Activated naive CD4-positive, alpha-beta T cell treated with anti-CD3 and anti-CD28 coated beads for 36 hours (primary cell): ENCODE measurements at regions of chr2 and their contacts with region 1.

Region 1: DNA sequence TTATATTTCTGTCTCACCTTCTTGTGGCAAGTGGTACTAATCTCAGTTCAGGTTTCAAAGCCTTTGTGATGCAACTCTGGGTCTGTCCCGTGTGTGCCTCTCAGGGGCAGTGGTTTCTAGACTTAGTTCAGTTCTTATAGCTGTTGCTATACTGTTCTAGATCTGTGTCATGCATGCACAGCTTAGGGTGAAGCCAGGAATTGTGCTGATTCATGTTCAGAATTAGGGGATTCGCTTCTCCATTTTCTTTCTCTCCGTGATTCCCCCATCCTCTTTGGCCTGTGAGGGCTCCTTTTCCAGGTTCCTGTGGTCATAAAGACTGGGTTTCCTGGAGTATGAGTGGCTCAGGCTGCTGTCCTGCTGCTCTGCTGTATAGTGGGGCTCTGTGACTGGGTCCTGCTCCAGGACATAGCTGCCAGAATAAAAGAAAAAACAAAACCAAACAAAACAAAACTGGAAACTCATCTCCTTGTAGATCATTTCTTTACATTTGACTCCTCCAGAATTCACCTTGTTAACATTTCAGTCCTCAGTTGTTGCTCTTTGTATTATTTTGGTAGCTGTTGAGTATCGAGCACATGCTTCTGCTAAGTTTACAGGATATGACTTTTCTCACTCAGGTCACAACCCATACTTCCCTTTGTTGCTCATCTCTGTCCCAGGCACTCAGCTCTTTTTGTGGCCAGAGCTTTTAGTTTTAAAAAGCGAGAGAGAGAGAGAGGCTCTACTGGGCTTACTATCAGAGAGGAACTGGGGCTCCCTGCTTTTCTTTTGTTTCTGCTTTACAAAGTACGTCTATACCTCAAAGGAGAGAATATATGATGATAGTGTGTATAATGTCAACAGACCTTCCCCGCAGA is 34.2 kb downstream of the CERS6 start:
- DNase-seq: peak; percentile 82
- H3K4me3 Mint-ChIP-seq: peak overlapping the region; percentile 57
- H3K27ac Mint-ChIP-seq: peak overlapping the region; percentile 90
- H3K4me1 Mint-ChIP-seq: peaks cover 48% of the 10 kb centered on the region
- H3K27me3 Mint-ChIP-seq: no peaks in the 10 kb centered on the region

Region 2: GRCh38 chr2:168160897-168161296 is 329.3 kb before region 1 on chr2:
- CTCF ChIA-PET with region 1: no interaction called
- intact Hi-C with region 1: loop called (anchors 1 kb)
- DNase-seq: peak; percentile 32
- H3K4me3 Mint-ChIP-seq: no peak overlapping the region
- H3K27ac Mint-ChIP-seq: no peak overlapping the region
- H3K4me1 Mint-ChIP-seq: peaks cover 32% of the 10 kb centered on the region
- H3K27me3 Mint-ChIP-seq: no peaks in the 10 kb centered on the region

Region 3: DNA sequence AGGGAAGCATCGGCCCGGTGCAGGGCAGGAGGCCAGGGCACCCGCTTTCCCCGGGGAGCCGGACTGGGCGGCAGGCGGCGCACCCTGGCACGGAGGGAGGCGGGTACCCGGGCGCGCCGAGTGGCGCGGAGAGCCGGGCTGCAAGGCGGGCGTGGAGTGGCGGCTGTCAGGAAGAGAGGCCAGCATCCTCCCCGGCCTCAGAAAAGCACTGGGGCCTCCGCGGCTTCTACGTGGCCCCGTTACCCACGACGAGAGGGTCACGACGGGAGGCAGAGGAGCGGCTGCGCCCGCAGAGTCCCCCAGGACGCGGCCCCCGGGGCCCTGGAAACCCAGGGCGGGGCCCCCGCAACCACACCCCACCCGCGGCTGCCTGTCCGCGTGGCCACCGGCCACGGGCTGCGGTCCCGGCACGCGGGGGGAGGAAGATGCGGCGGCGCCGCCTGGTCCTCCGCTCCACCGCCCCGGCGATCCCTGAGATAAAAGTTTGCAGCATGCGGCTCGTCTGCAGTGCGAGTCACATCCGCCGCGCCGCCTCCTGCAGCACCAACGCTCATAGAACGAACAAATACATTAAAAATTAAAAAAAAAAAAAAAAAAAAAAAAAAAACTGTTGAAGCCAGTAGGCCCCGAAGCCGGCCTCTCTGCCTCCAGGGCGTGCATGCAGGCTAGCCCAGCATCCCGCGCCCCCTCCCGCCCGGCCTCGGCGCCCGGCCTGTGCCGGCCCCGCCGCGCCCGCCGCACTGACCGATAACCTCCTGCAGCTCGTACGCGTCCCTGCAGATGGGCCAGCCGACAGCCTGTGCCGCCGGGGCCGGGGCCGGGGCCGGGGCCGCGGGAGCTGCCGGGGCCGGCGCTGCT is 243.5 kb before region 1 on chr2:
- CTCF ChIA-PET with region 1: interaction called, 3 read pairs
- intact Hi-C with region 1: loop called (anchors 1 kb)
- DNase-seq: peak; percentile 78
- H3K4me3 Mint-ChIP-seq: peak overlapping the region; percentile 88
- H3K27ac Mint-ChIP-seq: peak overlapping the region; percentile 88
- H3K4me1 Mint-ChIP-seq: peaks cover 35% of the 10 kb centered on the region
- H3K27me3 Mint-ChIP-seq: peaks cover 3% of the 10 kb centered on the region

Region 4: DNA sequence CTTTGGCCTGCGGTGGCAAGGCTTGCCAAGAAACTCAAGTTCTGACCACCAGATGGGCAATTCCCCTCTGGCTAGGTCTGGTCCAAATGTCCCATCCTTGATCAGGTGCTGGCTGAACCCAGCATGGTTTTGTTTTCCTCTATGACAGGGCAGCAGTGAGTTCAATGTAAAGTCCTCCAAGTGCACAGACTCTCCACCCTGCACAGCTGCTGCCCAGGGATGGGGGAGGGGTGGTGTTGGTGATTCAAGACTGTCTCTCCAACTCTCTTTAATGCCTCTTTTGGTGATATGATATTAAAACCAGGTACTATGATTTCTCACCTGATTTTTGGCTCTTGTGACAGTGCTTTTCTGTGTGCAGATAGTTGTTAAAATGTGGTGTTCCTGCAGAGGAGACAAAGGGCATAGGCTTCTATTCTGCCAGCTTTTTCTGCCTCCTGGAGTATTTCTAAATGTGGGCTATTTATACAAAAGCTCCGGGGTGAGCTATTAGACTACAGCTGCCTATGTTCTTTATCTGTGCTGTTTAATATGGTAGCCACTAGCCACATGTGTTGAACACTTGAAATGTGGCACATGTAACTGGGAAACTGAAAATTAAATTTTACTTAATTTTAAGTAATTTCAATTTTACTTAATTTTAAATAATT is 178.9 kb before region 1 on chr2:
- CTCF ChIA-PET with region 1: no interaction called
- intact Hi-C with region 1: no loop called
- DNase-seq: no peak
- H3K4me3 Mint-ChIP-seq: no peak overlapping the region
- H3K27ac Mint-ChIP-seq: no peak overlapping the region
- H3K4me1 Mint-ChIP-seq: no peaks in the 10 kb centered on the region
- H3K27me3 Mint-ChIP-seq: peaks cover 2% of the 10 kb centered on the region

Region 5: DNA sequence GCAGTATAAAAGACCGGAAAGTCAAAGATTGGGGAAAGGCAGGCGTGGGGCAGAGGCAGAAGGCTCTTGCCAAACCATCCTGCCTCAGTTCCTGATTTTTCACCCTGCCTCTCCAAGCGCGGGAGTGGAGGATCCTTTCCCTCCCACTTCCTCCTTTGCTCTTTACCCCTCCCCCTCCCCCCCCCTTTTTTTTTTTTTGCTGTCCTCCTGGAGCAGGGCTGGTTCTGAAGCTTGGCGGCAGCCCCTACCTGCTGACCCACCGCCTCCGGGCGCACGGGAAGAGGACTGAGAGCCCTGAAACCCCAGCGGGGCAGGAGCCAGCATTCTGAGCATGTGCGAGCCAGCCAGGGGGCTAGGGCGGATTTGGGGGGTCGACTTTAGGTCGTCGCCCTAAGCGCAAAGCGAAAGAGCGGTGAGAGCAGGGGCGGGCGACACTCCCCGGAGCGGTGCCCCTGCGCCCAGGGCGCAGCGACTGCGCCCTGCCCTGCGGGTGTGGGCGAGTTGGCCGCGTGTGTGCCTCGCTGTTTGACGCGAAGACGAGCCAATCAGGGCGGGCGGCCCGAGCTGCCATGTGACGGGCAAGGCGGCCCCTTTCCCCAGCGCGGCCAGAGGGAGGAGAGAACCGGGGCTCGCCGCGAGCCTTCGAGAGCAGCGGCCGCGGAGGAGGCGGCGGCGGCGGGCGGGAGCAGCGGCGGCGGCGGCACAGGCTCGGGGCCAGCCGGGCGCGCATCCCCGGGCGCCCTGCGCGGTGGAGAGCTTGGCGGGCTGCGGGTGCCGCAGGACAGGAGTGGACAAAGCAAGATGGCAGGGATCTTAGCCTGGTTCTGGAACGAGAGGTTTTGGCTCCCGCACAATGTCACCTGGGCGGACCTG is 34.4 kb before region 1 on chr2 and contains the start of gene CERS6:
- CTCF ChIA-PET with region 1: no interaction called
- intact Hi-C with region 1: loop called (anchors 1 kb)
- DNase-seq: peak; percentile 93
- H3K4me3 Mint-ChIP-seq: no peak within 1 kb of the TSS
- H3K27ac Mint-ChIP-seq: peak within 1 kb of the TSS; percentile 59
- H3K4me1 Mint-ChIP-seq: peaks cover 35% of the 10 kb centered on the region
- H3K27me3 Mint-ChIP-seq: no peaks in the 10 kb centered on the region
- total RNA-seq, gene CERS6: 9.7 to 10.0 TPM

Region 6: DNA sequence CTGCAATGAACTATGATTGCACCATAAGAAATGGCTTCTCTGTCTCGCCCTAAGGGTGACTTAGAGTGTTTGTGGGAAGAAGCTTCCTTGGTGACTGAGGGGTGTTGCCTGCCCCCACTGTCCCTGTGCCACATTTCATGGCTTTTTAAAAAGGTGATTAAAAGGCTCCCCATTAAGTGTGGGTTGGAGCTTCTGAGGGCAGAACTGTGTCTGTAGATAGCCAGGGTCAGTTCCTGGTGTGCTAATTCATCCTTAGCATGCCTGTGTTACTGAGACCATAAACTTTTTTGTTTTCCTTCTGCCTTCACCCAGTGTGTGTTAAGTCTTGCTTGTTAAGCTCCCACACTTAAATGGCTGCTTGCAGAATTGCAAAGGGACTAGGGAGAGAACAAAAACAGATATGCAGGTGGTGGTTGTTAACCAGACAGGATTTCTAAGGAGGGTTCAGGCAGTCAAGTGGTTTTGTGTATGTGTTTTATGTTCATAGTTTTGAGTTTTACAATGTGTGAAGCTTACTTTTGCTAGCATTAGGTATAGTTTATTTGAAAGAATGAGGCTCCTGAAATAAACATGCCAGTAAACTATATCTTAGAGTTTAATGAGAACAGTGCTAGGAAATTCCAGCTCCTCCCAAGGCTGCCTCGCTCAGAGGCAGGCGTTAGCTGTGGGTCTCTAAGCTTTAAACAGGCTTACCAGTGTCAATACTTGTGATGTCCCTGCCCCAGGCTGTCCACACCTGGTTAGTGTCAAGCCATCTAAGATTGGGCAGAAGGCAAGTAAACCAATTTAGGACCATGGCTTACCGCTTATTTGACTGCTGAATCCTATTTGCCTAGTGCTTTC is 19.7 kb before region 1 on chr2:
- CTCF ChIA-PET with region 1: no interaction called
- intact Hi-C with region 1: no loop called
- DNase-seq: no peak
- H3K4me3 Mint-ChIP-seq: no peak overlapping the region
- H3K27ac Mint-ChIP-seq: no peak overlapping the region
- H3K4me1 Mint-ChIP-seq: peaks cover 69% of the 10 kb centered on the region
- H3K27me3 Mint-ChIP-seq: no peaks in the 10 kb centered on the region

Region 7: GRCh38 chr2:168649105-168649504 is 158.9 kb after region 1 on chr2:
- CTCF ChIA-PET with region 1: interaction called, 5 read pairs
- intact Hi-C with region 1: loop called (anchors 5 kb)
- DNase-seq: no peak
- H3K4me3 Mint-ChIP-seq: no peak overlapping the region
- H3K27ac Mint-ChIP-seq: no peak overlapping the region
- H3K4me1 Mint-ChIP-seq: peaks cover 20% of the 10 kb centered on the region
- H3K27me3 Mint-ChIP-seq: no peaks in the 10 kb centered on the region

Region 8: DNA sequence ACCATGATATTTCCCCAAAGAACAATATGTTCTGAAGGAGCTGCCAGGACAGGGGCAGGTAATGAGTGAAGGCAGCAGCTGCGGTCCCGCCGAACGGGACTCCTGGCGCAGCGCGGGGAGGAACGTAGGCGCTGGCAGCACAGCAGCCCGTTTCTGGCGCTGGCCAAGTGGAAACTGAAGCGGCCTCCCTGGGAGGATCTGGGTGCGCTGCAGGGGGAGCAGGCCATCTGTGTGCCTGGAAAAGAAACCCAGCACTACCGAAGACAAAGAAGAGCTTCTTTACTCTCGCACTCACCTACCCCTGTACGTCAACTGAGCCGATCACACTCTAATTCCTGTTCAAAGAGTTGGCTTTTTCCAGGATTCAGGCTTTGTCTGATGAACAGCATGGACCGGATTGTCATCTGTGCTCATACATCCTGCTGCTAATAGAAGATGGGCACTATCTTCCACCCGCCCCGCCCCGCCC is 422.7 kb after region 1 on chr2:
- CTCF ChIA-PET with region 1: no interaction called
- intact Hi-C with region 1: loop called (anchors 1 kb)
- DNase-seq: peak; percentile 10
- H3K4me3 Mint-ChIP-seq: peak overlapping the region; percentile 43
- H3K27ac Mint-ChIP-seq: no peak overlapping the region
- H3K4me1 Mint-ChIP-seq: peaks cover 12% of the 10 kb centered on the region
- H3K27me3 Mint-ChIP-seq: peaks cover 20% of the 10 kb centered on the region